GM12878 (cell line): ENCODE measurements at regions of chr18 and their contacts with region 1.

Region 1: DNA sequence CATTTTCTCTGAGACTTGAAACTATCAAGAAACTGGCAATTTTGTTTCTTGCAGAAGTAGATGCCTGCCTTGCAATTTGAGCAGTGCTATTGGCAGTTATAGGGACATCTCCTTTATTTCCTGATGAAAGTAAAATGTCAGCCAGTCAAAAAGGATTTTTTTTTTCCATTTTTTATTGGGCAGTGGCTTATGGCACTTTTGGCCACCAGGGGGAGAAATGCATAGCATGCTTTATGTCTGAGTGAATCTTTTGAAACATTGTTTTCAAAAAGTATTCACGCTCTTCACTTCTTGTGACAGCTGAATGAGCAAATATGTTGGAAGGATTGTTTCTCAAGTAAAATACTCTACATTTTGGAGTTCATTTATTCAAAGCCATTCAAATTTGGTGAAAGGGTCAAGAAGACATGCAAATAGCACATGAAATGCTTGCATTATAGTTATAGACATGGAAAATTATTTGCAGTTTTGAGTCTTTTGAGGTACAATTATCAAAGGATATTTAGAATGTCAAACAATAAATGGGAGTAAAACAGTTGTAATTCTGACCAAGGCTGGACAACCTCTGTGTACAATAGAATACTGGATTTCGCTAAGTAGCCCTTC is 491.0 kb downstream of the CDH2 start:
- DNase-seq: no peak
- ATAC-seq: peak; percentile 34; the same call in 1 of the 3 replicates
- H3K4me3 ChIP-seq: no peak overlapping the region
- H3K27ac ChIP-seq: no peak overlapping the region
- H3K4me1 ChIP-seq: no peaks in the 10 kb centered on the region
- H3K27me3 ChIP-seq: no peaks in the 10 kb centered on the region
- CTCF ChIP-seq: peak; percentile 38 to 47 (median 40); a peak in 4 of 6 replicates
- EP300 ChIP-seq: no peak
- POLR2A ChIP-seq: no peak
- RAD21 ChIP-seq: peak; percentile 41; the same call in 1 of the 2 replicates

Region 2: DNA sequence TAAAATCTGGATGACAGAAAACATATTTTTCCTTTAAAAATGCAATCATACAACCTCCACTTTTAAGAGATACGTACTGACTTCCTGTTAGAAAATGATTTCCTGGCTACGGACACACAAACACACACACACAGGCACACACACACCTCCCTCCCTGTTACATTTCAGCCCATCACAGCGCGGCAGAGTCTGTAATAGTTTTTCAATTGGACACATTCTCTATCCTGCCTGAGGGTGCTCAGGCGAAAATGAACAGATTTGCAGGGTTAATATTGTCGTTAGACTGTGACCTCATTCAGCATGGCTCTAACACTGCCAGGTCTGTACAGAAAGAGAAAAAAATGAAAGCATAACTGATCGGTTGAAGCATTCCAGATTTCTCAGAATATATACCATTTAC is 1182.5 kb before region 1 on chr18:
- CTCF ChIA-PET with region 1: no interaction called
- POLR2A ChIA-PET with region 1: no interaction called
- RAD21 ChIA-PET with region 1: no interaction called
- SMC1A ChIA-PET with region 1: no interaction called
- in situ Hi-C with region 1: no loop called
- intact Hi-C with region 1: no loop called
- DNase-seq: no peak
- ATAC-seq: no peak
- H3K4me3 ChIP-seq: no peak overlapping the region
- H3K27ac ChIP-seq: no peak overlapping the region
- H3K4me1 ChIP-seq: no peaks in the 10 kb centered on the region
- H3K27me3 ChIP-seq: no peaks in the 10 kb centered on the region
- CTCF ChIP-seq: no peak
- EP300 ChIP-seq: no peak
- POLR2A ChIP-seq: no peak
- RAD21 ChIP-seq: no peak

Region 3: GRCh38 chr18:27585601-27586173 is 100.2 kb before region 1 on chr18:
- CTCF ChIA-PET with region 1: no interaction called
- POLR2A ChIA-PET with region 1: no interaction called
- RAD21 ChIA-PET with region 1: no interaction called
- SMC1A ChIA-PET with region 1: no interaction called
- in situ Hi-C with region 1: no loop called
- intact Hi-C with region 1: no loop called
- DNase-seq: no peak
- ATAC-seq: no peak
- H3K4me3 ChIP-seq: no peak overlapping the region
- H3K27ac ChIP-seq: no peak overlapping the region
- H3K4me1 ChIP-seq: no peaks in the 10 kb centered on the region
- H3K27me3 ChIP-seq: no peaks in the 10 kb centered on the region
- CTCF ChIP-seq: no peak
- EP300 ChIP-seq: no peak
- POLR2A ChIP-seq: no peak
- RAD21 ChIP-seq: no peak

Region 4: DNA sequence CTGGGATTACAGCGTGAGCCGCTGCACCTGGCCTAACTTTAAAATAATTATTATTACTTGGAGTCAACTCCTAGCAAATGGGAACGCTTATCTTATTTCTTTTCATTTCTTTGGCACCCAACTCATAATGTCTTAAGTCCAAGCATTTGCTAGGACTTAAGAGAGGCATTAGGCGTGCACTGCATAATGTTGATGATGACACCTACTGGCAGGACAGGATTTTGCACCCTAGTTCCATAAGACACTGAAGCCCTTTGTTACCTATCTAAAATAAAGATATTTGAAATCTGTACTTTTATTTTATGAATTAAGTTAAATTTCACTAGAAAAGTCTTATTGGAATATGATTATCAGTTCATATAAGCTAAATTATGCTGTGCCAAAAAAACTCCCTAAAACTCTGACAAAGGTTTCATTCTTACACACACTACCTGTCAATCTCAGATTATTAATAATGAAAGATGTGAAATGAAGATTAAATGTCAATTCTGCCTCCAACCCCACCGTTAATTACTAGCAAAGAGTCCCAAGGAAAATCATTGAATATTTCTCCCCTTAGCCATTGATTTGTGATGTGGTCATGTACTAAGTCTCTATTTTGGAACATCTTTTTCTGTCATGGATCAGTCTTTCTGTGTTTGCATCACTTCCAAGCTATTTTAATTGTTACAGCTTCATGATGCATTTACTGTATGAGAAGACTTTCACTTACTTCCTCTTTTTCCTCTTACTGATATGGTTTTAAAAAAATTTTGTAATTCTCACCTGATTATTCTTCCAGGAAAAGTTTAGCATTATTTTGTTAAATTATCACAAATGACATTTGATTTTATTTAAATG is 503.7 kb after region 1 on chr18:
- CTCF ChIA-PET with region 1: interaction called, 5 read pairs
- POLR2A ChIA-PET with region 1: no interaction called
- RAD21 ChIA-PET with region 1: no interaction called
- SMC1A ChIA-PET with region 1: no interaction called
- in situ Hi-C with region 1: no loop called
- intact Hi-C with region 1: loop called (anchors 2 kb)
- DNase-seq: peak; percentile 5
- ATAC-seq: peak; percentile 94
- H3K4me3 ChIP-seq: no peak overlapping the region
- H3K27ac ChIP-seq: no peak overlapping the region
- H3K4me1 ChIP-seq: no peaks in the 10 kb centered on the region
- H3K27me3 ChIP-seq: no peaks in the 10 kb centered on the region
- CTCF ChIP-seq: peak; percentile 61 to 69 (median 67)
- EP300 ChIP-seq: no peak
- POLR2A ChIP-seq: no peak
- RAD21 ChIP-seq: peak; percentile 58